AG04450 (cell line): ENCODE measurements at regions of chr11 and their contacts with region 1.

Region 1: DNA sequence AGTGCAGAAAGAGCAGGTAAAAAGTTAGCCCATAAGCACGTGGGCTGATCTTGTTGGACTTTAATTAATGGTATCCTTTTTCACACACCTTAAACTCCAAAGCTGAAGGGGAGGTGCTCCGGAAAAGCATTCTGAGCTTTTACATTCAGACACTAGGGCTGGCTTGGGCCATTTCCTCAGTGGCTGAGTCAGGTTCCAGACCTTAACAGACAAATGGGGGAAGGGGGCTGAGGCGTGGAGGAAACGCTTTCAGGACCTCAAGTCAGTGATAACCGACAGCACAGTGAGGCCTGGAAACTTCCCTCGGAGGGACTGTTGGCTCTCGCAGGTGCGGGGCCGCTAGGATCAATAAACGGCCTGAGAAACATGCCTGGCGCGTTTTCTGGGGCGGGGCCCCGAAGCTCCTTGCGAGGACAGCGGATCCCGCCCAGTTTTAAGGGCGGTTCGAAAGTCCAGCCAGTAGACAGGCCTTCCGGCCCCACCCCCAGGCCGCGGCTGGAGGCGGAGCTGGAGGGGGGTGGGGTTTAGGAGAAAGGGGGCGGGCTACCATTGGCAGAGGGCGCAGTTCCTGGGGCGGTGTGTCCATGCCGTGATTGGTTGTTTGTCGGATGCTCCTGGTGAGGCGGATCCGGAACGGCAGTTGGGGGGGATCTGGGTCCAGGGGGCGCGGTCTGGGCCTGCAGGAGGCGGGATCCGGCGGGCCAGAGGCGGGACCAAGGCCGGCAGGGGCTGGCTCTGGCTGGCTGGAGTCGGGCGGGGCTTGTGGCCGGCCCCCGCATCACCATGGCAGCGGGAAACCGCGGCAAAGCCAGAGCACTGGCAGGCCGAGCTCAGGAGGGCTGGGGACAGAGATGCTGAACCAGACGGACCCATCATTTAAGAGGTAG is 8.0 kb downstream of the C11orf52 start:
- DNase-seq: peak; percentile 95
- H3K4me3 ChIP-seq: peak overlapping the region; percentile 59
- H3K27ac ChIP-seq: peak overlapping the region; percentile 47
- H3K27me3 ChIP-seq: no peaks in the 10 kb centered on the region
- CTCF ChIP-seq: no peak

Region 2: DNA sequence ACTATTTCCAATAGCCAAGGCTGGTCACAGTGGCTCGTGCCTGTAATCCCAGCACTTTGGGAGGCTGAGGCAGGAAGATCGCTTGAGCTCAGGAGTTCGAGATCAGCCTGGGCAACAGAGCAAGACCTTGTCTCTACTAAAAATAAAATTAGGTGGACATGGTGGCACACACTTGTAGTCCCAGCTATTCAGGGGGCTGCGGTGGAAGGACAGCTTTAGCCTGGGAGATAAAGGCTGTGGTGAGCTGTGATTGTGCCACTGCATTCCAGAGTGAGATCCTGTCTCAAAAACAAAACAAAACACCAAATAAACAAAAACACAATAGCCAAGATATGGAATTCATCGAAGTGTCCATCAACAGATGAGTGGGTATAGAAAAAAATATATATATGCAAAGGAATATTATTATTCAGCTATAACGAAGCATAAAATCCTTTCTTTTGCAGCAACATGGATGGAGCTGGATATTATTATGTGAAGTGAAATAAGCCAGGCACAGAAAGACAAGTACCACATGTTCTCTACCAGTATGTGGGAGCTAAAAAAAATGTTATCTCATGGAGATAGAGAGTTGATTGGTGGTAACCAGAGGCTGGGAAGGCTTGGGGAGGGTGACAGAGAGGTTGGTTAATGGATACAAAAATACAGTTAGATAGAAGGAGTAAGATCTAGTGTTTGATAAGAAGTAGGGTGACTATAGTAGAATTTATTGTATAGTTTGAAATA is 75.9 kb after region 1 on chr11:
- CTCF ChIA-PET with region 1: interaction called, 30 read pairs
- POLR2A ChIA-PET with region 1: no interaction called
- DNase-seq: no peak
- H3K4me3 ChIP-seq: no peak overlapping the region
- H3K27ac ChIP-seq: no peak overlapping the region
- H3K27me3 ChIP-seq: no peaks in the 10 kb centered on the region
- CTCF ChIP-seq: no peak